Activated T-helper 2 cell treated with anti-CD3 and anti-CD28 coated beads, Interferon-gamma antibody, Interleukin-2, Interleukin-4, amounts not matched to agents 10 μg/mL and 5 μg/mL and 100 μg/mL, durations not matched to agents 14 hours and 24 hours and 36 hours (primary cell): ENCODE measurements at regions of chr17 and their contacts with region 1.

Region 1: GRCh38 chr17:73092523-73093135 is at the start of gene SLC39A11:
- DNase-seq: peak; percentile 87
- H3K4me3 Mint-ChIP-seq: peak within 1 kb of the TSS; percentile 92
- H3K27ac Mint-ChIP-seq: peak within 1 kb of the TSS; percentile 88
- H3K4me1 Mint-ChIP-seq: peaks cover 10% of the 10 kb centered on the region
- H3K27me3 Mint-ChIP-seq: peaks cover 5% of the 10 kb centered on the region
- total RNA-seq, gene SLC39A11: 20.2 and 25.2 TPM in 2 replicates

Region 2: DNA sequence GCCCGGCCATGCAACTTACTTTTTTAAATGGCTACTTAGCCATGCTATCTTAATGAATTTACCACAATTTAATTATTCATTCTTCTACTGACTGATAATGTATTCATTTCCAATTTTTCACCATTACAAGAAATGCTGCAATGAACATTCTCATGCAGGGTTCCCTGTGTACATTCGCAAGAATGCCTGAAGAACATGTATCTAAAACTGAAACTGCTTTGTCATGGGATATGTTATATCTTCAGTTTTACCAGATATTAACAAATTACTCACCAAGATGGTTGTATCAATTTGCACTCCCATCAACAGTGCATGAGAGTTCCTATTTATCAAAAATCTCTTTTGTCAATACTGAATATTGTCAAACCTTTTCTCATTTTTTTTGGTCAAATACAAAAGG is 101.0 kb before region 1 on chr17:
- intact Hi-C with region 1: loop called (anchors 5 kb)
- DNase-seq: no peak
- H3K4me3 Mint-ChIP-seq: no peak overlapping the region
- H3K27ac Mint-ChIP-seq: no peak overlapping the region
- H3K4me1 Mint-ChIP-seq: peaks cover 15% of the 10 kb centered on the region
- H3K27me3 Mint-ChIP-seq: no peaks in the 10 kb centered on the region